BJ (cell line): ENCODE measurements at regions of chr16 and their contacts with region 1.

Region 1: GRCh38 chr16:57576429-57576870 is 34.0 kb downstream of the ADGRG5 start:
- DNase-seq: no peak
- H3K4me3 ChIP-seq: no peak overlapping the region
- H3K27me3 ChIP-seq: peaks cover 4% of the 10 kb centered on the region
- CTCF ChIP-seq: peak; percentile 99

Region 2: DNA sequence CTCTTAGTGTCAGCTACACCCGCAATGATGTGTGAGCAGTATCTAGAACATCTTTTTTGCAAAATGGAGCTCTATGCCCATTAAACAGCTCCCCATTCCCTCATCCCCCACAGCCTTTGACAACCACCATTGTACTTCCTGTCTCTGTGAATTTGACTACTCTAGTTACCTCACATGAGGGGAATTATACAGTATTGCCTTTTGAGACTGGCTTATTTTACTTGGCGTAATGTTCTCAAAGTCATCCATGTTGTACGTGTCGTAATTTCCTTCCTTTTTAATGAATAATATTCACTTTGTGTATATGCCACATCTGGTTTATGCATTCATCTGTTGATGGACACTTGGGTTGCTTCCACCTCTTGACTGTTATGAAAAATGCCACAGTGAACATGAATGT is 241.1 kb before region 1 on chr16:
- CTCF ChIA-PET with region 1: no interaction called
- POLR2A ChIA-PET with region 1: no interaction called
- DNase-seq: no peak
- H3K4me3 ChIP-seq: no peak overlapping the region
- H3K27me3 ChIP-seq: peaks cover 20% of the 10 kb centered on the region
- CTCF ChIP-seq: no peak

Region 3: GRCh38 chr16:57551057-57551456 is 25.4 kb before region 1 on chr16:
- CTCF ChIA-PET with region 1: interaction called, 11 read pairs
- POLR2A ChIA-PET with region 1: no interaction called
- DNase-seq: no peak
- H3K4me3 ChIP-seq: no peak overlapping the region
- H3K27me3 ChIP-seq: peaks cover 6% of the 10 kb centered on the region
- CTCF ChIP-seq: no peak

Region 4: DNA sequence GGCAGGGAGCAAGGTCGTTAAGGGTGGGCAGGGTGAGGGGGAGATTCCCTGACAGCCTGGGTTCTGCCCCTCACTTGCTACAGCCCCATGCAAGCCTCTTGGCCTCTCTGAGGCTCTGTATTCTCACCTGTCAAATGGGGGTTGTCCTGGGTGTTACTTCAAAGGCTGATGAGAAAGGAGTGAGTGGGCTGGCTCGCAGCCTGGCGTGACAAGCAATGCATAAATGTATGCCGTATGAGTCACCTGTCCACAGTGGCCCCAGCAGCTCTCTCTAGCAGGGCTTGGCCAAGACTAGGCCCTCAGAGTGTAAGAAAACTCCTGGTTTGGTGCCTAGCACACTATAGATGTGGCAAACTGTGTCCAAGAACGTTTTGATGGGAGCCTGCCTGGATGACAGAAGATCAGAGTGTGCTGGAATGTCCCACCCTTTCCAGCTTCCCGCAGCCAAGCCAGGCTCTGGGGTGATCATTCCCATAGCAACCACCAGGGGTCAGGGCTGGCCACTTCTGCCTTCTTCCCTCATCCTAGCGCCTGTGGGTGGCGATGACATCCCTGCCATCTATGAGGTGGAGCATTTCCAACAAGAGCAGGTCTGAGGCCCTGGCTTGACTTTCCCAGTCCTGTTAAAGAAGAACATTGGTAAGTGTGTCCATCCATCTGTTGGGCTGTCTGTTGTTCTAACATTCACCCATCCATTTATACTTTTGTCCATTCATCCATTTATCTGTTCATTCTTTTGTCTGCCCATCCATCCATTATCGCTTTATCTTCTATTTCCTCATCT is 14.8 kb after region 1 on chr16:
- CTCF ChIA-PET with region 1: interaction called, 36 read pairs
- POLR2A ChIA-PET with region 1: no interaction called
- DNase-seq: peak; percentile 17
- H3K4me3 ChIP-seq: no peak overlapping the region
- H3K27me3 ChIP-seq: peaks cover 5% of the 10 kb centered on the region
- CTCF ChIP-seq: peak; percentile 91

Region 5: GRCh38 chr16:57609541-57610401 is 33.3 kb after region 1 on chr16:
- CTCF ChIA-PET with region 1: interaction called, 16 read pairs
- POLR2A ChIA-PET with region 1: no interaction called
- DNase-seq: no peak
- H3K4me3 ChIP-seq: no peak overlapping the region
- H3K27me3 ChIP-seq: peaks cover 9% of the 10 kb centered on the region
- CTCF ChIP-seq: no peak

Region 6: DNA sequence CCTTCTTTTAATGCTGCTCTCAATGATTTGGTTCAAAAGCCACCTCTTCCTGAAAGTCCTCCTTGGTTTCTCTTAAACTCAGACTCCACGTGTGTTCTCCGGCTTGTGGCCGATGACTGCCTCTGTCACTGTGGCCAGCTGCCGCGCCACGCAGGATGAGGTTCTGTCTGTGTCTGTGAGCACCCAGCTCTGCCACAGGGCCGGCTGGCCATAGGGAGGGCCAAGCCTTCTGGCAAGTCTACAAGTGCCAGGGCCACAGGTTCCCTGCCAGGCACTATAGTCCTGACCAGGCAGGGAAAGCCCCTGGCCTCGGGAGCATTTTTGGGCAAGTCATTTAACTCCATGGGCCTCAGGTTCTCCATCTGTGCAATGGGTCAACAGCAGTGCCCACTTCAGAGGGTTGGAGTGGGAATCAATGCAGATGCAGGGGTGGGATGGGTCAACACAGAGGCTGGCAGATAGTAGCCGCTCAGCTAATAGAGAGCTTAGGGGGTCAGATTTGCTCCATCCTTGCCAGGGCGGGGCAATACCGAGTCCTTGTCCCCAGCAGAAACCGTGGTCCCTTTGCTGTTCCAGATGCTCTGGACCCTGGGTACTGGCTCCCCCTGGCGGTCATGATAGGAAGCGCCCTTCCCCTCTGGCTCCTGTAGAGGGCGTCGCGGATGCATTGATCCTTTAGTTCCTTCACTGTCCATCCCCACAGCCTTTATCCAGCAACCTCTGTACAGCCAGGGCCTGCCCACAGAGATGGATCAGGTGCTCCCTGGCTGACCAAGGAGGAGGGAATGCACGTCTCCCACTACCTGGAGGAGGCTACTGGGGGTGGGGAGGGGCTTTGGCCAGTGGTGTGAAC is 72.4 kb after region 1 on chr16:
- CTCF ChIA-PET with region 1: interaction called, 126 read pairs
- POLR2A ChIA-PET with region 1: no interaction called
- DNase-seq: no peak
- H3K4me3 ChIP-seq: no peak overlapping the region
- H3K27me3 ChIP-seq: no peaks in the 10 kb centered on the region
- CTCF ChIP-seq: peak; percentile 100

Region 7: GRCh38 chr16:57720142-57720575 is 143.7 kb after region 1 on chr16:
- CTCF ChIA-PET with region 1: interaction called, 20 read pairs
- POLR2A ChIA-PET with region 1: no interaction called
- DNase-seq: no peak
- H3K4me3 ChIP-seq: no peak overlapping the region
- H3K27me3 ChIP-seq: peaks cover 4% of the 10 kb centered on the region; the same call in 1 of the 2 replicates
- CTCF ChIP-seq: peak; percentile 78